CD8-positive, alpha-beta T cell (primary cell): ENCODE measurements at regions of chr11 and their contacts with region 1.

Region 1: GRCh38 chr11:46392421-46393230 is 1.1 kb upstream of the CHRM4 start:
- DNase-seq: peak; percentile 59 to 86 (median 76)
- ATAC-seq: peak; percentile 91
- H3K4me3 ChIP-seq: no peak overlapping the region
- H3K4me3 Mint-ChIP-seq: peak overlapping the region; percentile 67
- H3K27ac ChIP-seq: no peak overlapping the region
- H3K27ac Mint-ChIP-seq: no peak overlapping the region
- H3K4me1 ChIP-seq: peaks cover 26% of the 10 kb centered on the region
- H3K4me1 Mint-ChIP-seq: peaks cover 24% of the 10 kb centered on the region
- H3K27me3 ChIP-seq: peaks cover 31 to 33% of the 10 kb centered on the region in 2 experiments
- H3K27me3 Mint-ChIP-seq: peaks cover 36% of the 10 kb centered on the region
- CTCF ChIP-seq: no peak

Region 2: GRCh38 chr11:46537537-46538295 is 145.1 kb after region 1 on chr11:
- CTCF ChIA-PET with region 1: no interaction called
- POLR2A ChIA-PET with region 1: no interaction called
- intact Hi-C with region 1: loop called in 1 of 2 experiments (anchors 2 kb)
- DNase-seq: peak; percentile 19 to 78 (median 57)
- ATAC-seq: peak; percentile 91
- H3K4me3 ChIP-seq: no peak overlapping the region
- H3K4me3 Mint-ChIP-seq: no peak overlapping the region
- H3K27ac ChIP-seq: no peak overlapping the region
- H3K27ac Mint-ChIP-seq: peak overlapping the region; percentile 47
- H3K4me1 ChIP-seq: peaks cover 7% of the 10 kb centered on the region
- H3K4me1 Mint-ChIP-seq: peaks cover 35% of the 10 kb centered on the region
- H3K27me3 ChIP-seq: no peaks in the 10 kb centered on the region
- H3K27me3 Mint-ChIP-seq: no peaks in the 10 kb centered on the region
- CTCF ChIP-seq: peak; percentile 93